ENCODE measurements at regions of chr1 and their contacts with region 1.

Region 1: GRCh38 chr1:109984456-109985275 is at the start of gene AHCYL1:
- DNase-seq: peak; percentile 99 to 100
- ATAC-seq: peak; percentile 96 to 99 (median 98)
- H3K4me3 ChIP-seq: peak within 1 kb of the TSS; percentile 64 to 90 (median 82)
- H3K27ac ChIP-seq: peak within 1 kb of the TSS; percentile 92 to 99 (median 98)
- H3K4me1 ChIP-seq: peaks cover 6 to 66% (median 53%) of the 10 kb centered on the region in 9 donors
- H3K27me3 ChIP-seq: no peaks in the 10 kb centered on the region
- CTCF ChIP-seq: peak; percentile 96 to 99 (median 99)
- total RNA-seq, gene AHCYL1: 39.2 to 58.9 (median 48.7) TPM

Region 2: DNA sequence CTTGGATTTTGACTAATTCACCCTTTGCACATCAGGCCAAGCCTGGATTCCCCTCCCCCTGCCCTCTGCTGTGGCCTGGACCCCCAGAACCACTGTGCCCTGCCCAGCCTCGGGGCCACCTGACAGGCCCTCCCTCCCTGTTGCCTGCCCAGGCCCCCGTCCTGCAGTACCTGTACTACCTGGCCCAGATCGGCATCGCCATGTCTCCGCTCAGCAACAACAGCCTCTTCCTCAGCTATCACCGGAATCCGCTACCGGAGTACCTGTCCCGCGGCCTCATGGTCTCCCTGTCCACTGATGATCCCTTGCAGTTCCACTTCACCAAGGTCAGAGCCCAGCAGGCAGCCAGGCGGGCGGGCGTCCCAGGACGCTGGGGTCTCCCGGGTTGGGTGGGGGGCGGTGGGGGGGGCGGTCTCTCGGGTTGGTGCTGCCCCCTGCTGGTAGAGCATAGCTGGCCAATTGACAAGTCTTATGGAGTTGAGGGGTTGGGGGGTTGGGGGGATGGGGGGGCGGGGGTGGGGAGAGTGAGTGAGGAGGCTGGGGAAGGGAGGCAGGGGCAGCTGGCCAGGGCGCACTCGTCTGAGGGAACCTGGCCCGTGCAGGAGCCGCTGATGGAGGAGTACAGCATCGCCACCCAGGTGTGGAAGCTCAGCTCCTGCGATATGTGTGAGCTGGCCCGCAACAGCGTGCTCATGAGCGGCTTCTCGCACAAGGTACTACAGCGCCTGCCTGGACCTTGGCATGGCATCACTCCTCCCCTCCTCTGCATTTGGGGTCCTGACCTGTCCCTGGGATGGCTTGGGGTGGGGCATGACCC is 354.4 kb before region 1 on chr1:
- intact Hi-C with region 1: loop called in 2 of 10 experiments (anchors 10 kb)
- DNase-seq: no peak
- ATAC-seq: peak in 1 of 8 donors; percentile 11
- H3K4me3 ChIP-seq: no peak overlapping the region
- H3K27ac ChIP-seq: no peak overlapping the region
- H3K4me1 ChIP-seq: peaks cover 0 to 16% (median 0%) of the 10 kb centered on the region in 9 donors
- H3K27me3 ChIP-seq: no peaks in the 10 kb centered on the region
- CTCF ChIP-seq: peak; percentile 14 to 50 (median 36)

Region 3: DNA sequence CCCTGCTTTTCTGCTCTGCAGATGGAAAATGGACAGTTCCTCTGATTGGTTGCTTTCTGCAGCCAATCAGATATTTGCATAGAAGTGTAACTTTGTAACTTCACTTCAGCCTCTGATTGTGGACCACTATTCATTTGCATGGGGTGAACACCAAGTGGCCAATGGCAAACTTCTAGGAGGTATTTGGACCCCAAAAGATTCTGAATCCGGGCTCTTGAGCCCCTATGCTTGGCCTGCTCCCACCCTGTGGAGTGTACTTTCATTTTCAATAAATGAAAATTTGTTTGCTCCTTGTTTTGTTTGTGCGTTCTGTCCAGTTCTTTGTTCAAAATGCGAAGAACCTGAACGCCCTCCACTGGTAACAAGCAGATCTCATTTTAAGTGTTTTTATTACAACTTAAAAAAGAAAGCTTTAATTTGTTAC is 335.2 kb before region 1 on chr1:
- intact Hi-C with region 1: loop called in 3 of 10 experiments (anchors 5 to 10 kb)
- DNase-seq: no peak
- ATAC-seq: peak in 5 of 8 donors; percentile 15 to 46 (median 33)
- H3K4me3 ChIP-seq: peak overlapping the region in 6 of 10 donors; percentile 29 to 42 (median 38)
- H3K27ac ChIP-seq: peak overlapping the region in 1 of 10 donors; percentile 4
- H3K4me1 ChIP-seq: peaks cover 0 to 2% (median 0%) of the 10 kb centered on the region in 9 donors
- H3K27me3 ChIP-seq: no peaks in the 10 kb centered on the region
- CTCF ChIP-seq: peak in 7 of 9 donors; percentile 17 to 52 (median 39)

Region 4: DNA sequence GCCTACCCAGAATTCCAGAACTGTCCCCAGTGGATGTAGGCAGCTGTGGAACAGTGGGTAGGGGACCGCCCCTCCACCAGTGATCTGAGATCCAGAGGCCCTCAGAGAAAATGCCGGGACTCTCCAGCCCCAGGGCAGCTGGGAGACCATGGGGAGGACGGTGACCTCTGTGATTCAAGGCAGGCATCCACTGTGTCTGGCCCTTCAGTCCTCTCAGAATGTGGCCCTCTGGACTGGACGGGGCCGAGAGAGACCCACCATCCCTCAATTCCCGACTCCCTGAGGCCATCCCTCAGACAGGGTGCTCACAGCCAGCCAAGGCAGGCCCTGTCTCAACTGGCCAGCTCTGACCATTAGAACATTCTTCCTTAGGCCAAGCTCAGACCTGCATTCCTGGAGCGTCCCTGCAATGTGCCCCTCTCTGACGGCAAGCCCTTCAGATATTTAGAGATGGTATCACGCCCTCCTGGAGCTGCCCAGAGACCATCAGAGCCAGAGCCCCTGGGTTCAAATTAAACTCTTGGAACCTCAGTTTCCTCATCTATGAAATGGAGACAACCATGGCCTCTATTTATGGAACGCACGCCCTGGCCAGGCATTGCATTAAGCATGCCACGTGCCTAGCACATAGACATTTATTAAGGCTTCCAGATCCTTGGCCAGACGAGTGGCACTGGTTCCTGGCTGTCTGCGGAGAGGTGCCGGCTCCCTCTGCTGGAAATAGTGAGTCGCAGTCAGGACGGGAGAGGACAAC is 211.3 kb before region 1 on chr1:
- intact Hi-C with region 1: loop called (anchors 1 to 5 kb)
- DNase-seq: peak; percentile 77 to 86
- ATAC-seq: peak; percentile 82 to 90 (median 87)
- H3K4me3 ChIP-seq: no peak overlapping the region
- H3K27ac ChIP-seq: no peak overlapping the region
- H3K4me1 ChIP-seq: peaks cover 0 to 21% (median 8%) of the 10 kb centered on the region in 9 donors
- H3K27me3 ChIP-seq: no peaks in the 10 kb centered on the region
- CTCF ChIP-seq: peak; percentile 77 to 93 (median 87)

Region 5: GRCh38 chr1:109910123-109910962 is 74.3 kb before region 1 on chr1 and contains the start of gene CSF1:
- intact Hi-C with region 1: loop called in 5 of 10 experiments (anchors 1 to 5 kb)
- DNase-seq: peak; percentile 83 to 88
- ATAC-seq: peak; percentile 69 to 88 (median 80)
- H3K4me3 ChIP-seq: peak within 1 kb of the TSS; percentile 69 to 97 (median 89)
- H3K27ac ChIP-seq: peak within 1 kb of the TSS; percentile 77 to 93 (median 88)
- H3K4me1 ChIP-seq: peaks cover 26 to 84% (median 62%) of the 10 kb centered on the region in 9 donors
- H3K27me3 ChIP-seq: peaks cover 0 to 17% (median 0%) of the 10 kb centered on the region in 7 donors
- CTCF ChIP-seq: peak in 2 of 9 donors; percentile 13 to 26
- total RNA-seq, gene CSF1: 6.3 to 26.2 (median 12.3) TPM

Region 6: GRCh38 chr1:109931189-109931731 is 53.4 kb before region 1 on chr1:
- intact Hi-C with region 1: loop called in 7 of 10 experiments (anchors 5 to 10 kb)
- DNase-seq: peak; percentile 88 to 91
- ATAC-seq: peak; percentile 74 to 89 (median 82)
- H3K4me3 ChIP-seq: no peak overlapping the region
- H3K27ac ChIP-seq: peak overlapping the region; percentile 14 to 84 (median 79)
- H3K4me1 ChIP-seq: peaks cover 32 to 80% (median 68%) of the 10 kb centered on the region in 9 donors
- H3K27me3 ChIP-seq: no peaks in the 10 kb centered on the region
- CTCF ChIP-seq: no peak

Region 7: GRCh38 chr1:110188035-110188618 is 203.5 kb after region 1 on chr1:
- intact Hi-C with region 1: no loop called
- DNase-seq: peak in 1 of 2 donors; percentile 61
- ATAC-seq: peak; percentile 38 to 88 (median 65)
- H3K4me3 ChIP-seq: no peak overlapping the region
- H3K27ac ChIP-seq: peak overlapping the region in 9 of 10 donors; percentile 32 to 92 (median 67)
- H3K4me1 ChIP-seq: peaks cover 0 to 59% (median 30%) of the 10 kb centered on the region in 9 donors
- H3K27me3 ChIP-seq: no peaks in the 10 kb centered on the region
- CTCF ChIP-seq: no peak